Naive thymus-derived CD4-positive, alpha-beta T cell (primary cell): ENCODE measurements at regions of chr19 and their contacts with region 1.

Region 1: GRCh38 chr19:5827891-5828660 is 11.4 kb downstream of the FUT6 start:
- DNase-seq: peak; percentile 91 to 98 (median 94)
- ATAC-seq: peak; percentile 90
- H3K4me3 ChIP-seq: peak overlapping the region; percentile 76
- H3K4me3 Mint-ChIP-seq: peak overlapping the region; percentile 91 to 100 (median 97)
- H3K27ac ChIP-seq: peak overlapping the region; percentile 80
- H3K27ac Mint-ChIP-seq: peak overlapping the region; percentile 94 to 100 (median 97)
- H3K4me1 ChIP-seq: peaks cover 10 to 17% of the 10 kb centered on the region in 2 donors
- H3K4me1 Mint-ChIP-seq: peaks cover 5 to 19% (median 10%) of the 10 kb centered on the region in 7 donors
- H3K27me3 ChIP-seq: no peaks in the 10 kb centered on the region
- H3K27me3 Mint-ChIP-seq: peaks cover 0 to 6% (median 0%) of the 10 kb centered on the region in 5 donors

Region 2: GRCh38 chr19:5680437-5681368 is 147.4 kb before region 1 on chr19 and contains the starts of genes HSD11B1L and MICOS13:
- CTCF ChIA-PET with region 1: no interaction called
- POLR2A ChIA-PET with region 1: no interaction called
- intact Hi-C with region 1: loop called in 1 of 2 experiments (anchors 1 kb)
- DNase-seq: peak; percentile 98 to 99 (median 99)
- ATAC-seq: peak; percentile 96
- H3K4me3 ChIP-seq: peak within 1 kb of the TSS; percentile 100
- H3K4me3 Mint-ChIP-seq: peak within 1 kb of the TSS; percentile 85 to 97 (median 94)
- H3K27ac ChIP-seq: peak within 1 kb of the TSS; percentile 98
- H3K27ac Mint-ChIP-seq: peak within 1 kb of the TSS; percentile 94 to 100 (median 97)
- H3K4me1 ChIP-seq: peaks cover 8 to 18% of the 10 kb centered on the region in 2 donors
- H3K4me1 Mint-ChIP-seq: peaks cover 20 to 33% (median 25%) of the 10 kb centered on the region in 7 donors
- H3K27me3 ChIP-seq: no peaks in the 10 kb centered on the region
- H3K27me3 Mint-ChIP-seq: peaks cover 0 to 18% (median 0%) of the 10 kb centered on the region in 5 donors
- total RNA-seq, gene HSD11B1L: 2.8 to 5.2 (median 3.6) TPM
- total RNA-seq, gene MICOS13: 26.1 to 49.3 (median 38.4) TPM

Region 3: DNA sequence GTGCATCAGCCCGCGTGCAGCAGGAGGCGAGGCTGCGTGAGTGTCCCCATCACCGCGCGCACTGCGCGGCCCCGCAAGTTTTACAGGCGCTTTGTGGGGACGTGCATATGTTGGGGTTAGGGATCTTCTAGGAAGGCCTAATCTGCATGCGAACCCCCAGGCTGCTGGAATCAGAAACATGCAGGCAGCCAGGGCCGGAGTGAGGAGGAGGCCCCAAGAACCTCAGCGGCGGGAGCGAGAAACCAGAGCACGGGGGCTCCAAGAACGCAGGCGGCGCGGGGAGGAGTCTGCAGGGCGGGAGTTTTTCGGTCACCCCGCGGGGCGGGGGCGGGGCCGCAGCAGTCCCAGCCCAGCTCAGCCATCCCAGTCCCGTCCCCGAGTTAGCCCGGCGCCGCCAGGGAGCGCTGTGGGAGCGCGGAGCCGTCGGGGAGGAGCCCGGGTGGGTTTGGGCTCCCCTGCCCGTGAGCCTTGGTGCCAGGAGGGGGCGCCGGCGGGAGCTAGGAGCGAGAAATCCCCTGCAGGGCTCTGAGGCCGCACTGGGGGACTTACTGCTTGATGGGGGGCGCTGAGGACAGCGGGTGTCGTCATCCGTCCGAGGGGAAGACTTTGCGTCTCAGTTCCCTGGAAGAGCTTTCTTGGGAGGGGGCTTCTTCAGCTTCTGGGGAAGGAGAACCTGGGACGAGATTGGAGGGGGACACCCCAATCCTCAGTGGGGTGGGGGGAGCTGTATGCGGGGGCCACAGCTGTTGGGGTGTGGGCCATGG is 24.1 kb before region 1 on chr19:
- CTCF ChIA-PET with region 1: interaction called, 20 read pairs
- POLR2A ChIA-PET with region 1: interaction called, 22 read pairs
- intact Hi-C with region 1: loop called (anchors 1 kb)
- DNase-seq: peak; percentile 89 to 99 (median 93)
- ATAC-seq: peak; percentile 98
- H3K4me3 ChIP-seq: peak overlapping the region; percentile 64
- H3K4me3 Mint-ChIP-seq: peak overlapping the region; percentile 62 to 87 (median 80)
- H3K27ac ChIP-seq: peak overlapping the region; percentile 44
- H3K27ac Mint-ChIP-seq: peak overlapping the region in 8 of 9 donors; percentile 28 to 83 (median 72)
- H3K4me1 ChIP-seq: peaks cover 13 to 20% of the 10 kb centered on the region in 2 donors
- H3K4me1 Mint-ChIP-seq: peaks cover 7 to 24% (median 21%) of the 10 kb centered on the region in 7 donors
- H3K27me3 ChIP-seq: peaks cover 0 to 2% of the 10 kb centered on the region in 2 donors
- H3K27me3 Mint-ChIP-seq: peaks cover 12 to 45% (median 18%) of the 10 kb centered on the region in 5 donors

Region 4: DNA sequence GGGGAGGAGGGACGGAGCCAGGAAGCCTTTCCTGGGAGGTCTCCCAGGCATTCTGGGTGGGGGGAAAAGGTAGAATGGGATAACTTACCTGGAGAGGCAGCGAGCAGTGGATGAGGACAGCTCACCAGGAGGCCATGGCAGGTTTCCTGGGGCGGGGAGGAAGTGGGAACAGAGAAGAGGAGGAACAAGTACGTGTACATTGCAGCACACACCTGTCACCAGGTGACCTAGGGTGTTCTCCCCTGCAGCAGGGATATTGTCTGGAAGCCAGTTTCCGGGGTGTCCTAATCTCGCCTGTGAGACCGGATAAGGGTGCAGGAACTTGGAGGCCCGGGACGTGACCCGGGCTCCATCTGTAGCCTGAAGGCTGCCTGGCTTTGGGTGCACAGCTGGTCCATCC is 23.2 kb after region 1 on chr19 and contains the start of gene FUT3:
- CTCF ChIA-PET with region 1: no interaction called
- POLR2A ChIA-PET with region 1: no interaction called
- intact Hi-C with region 1: no loop called
- DNase-seq: no peak
- ATAC-seq: no peak
- H3K4me3 ChIP-seq: no peak within 1 kb of the TSS
- H3K4me3 Mint-ChIP-seq: no peak within 1 kb of the TSS
- H3K27ac ChIP-seq: no peak within 1 kb of the TSS
- H3K27ac Mint-ChIP-seq: no peak within 1 kb of the TSS
- H3K4me1 ChIP-seq: no peaks in the 10 kb centered on the region
- H3K4me1 Mint-ChIP-seq: peaks cover 0 to 5% (median 0%) of the 10 kb centered on the region in 7 donors
- H3K27me3 ChIP-seq: no peaks in the 10 kb centered on the region
- H3K27me3 Mint-ChIP-seq: peaks cover 0 to 3% (median 0%) of the 10 kb centered on the region in 5 donors
- total RNA-seq, gene FUT3: 0.29 to 0.45 TPM in 2 of 5 experiments, not detected in the others

Region 5: GRCh38 chr19:5961969-5962945 is 134.2 kb after region 1 on chr19:
- CTCF ChIA-PET with region 1: no interaction called
- POLR2A ChIA-PET with region 1: interaction called, 3 read pairs
- intact Hi-C with region 1: loop called in 1 of 2 experiments (anchors 2 kb)
- DNase-seq: peak; percentile 42 to 92 (median 88)
- ATAC-seq: peak; percentile 96
- H3K4me3 ChIP-seq: peak overlapping the region; percentile 38
- H3K4me3 Mint-ChIP-seq: peak overlapping the region; percentile 79 to 89 (median 84)
- H3K27ac ChIP-seq: peak overlapping the region; percentile 77
- H3K27ac Mint-ChIP-seq: peak overlapping the region; percentile 95 to 100 (median 99)
- H3K4me1 ChIP-seq: peaks cover 56 to 84% of the 10 kb centered on the region in 2 donors
- H3K4me1 Mint-ChIP-seq: peaks cover 69 to 99% (median 89%) of the 10 kb centered on the region in 7 donors
- H3K27me3 ChIP-seq: no peaks in the 10 kb centered on the region
- H3K27me3 Mint-ChIP-seq: no peaks in the 10 kb centered on the region